Naive thymus-derived CD8-positive, alpha-beta T cell (primary cell): ENCODE measurements at regions of chr2 and their contacts with region 1.

Region 1: DNA sequence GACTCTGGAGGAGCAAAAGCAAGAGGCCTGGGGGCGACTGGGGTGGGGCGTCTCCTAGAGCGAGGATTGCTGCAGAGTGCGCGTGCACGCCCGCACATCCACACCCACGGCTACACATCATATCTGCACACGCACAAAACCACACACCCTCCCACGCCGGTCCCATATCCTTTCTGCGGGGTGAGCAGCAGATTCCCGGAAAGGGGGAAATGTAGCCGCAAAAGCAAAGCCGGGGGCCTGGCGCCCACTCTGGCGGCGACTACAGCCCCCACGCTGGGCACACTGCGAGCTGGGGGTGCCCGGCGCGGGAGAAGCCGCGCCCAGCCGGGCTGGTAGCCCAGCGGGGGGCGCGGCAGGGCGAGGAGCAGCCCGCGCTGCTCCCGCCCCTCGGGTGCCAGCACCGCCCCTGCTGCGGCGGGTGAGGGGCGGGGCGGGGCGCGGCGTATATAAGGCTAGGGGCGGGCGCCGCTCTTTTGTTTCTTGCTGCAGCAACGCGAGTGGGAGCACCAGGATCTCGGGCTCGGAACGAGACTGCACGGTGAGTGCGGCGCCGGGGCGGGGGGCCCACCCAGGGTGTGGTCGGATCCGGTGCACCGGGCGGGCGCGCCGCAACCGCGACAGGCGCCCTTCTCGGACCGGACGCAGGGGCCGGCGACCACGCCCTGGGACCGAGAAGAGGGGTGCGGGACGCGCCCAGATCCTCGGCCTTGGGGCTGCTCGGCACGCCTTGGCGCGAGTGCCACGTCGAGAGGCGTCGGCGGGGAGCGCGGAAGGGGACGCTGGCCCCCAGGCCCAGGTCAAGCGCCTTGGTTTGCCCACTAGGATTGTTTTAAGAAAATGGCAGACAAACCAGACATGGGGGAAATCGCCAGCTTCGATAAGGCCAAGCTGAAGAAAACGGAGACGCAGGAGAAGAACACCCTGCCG is at the start of gene TMSB10:
- DNase-seq: peak; percentile 83 to 95 (median 92)
- ATAC-seq: peak; percentile 70 to 71
- H3K4me3 Mint-ChIP-seq: peak within 1 kb of the TSS; percentile 92 to 98 (median 96)
- H3K27ac Mint-ChIP-seq: peak within 1 kb of the TSS; percentile 91 to 98 (median 96)
- H3K4me1 Mint-ChIP-seq: peaks cover 37 to 78% (median 71%) of the 10 kb centered on the region in 4 donors
- H3K27me3 Mint-ChIP-seq: no peaks in the 10 kb centered on the region
- polyA plus RNA-seq, gene TMSB10: 6,950 to 8,855 (median 7,882) TPM

Region 2: DNA sequence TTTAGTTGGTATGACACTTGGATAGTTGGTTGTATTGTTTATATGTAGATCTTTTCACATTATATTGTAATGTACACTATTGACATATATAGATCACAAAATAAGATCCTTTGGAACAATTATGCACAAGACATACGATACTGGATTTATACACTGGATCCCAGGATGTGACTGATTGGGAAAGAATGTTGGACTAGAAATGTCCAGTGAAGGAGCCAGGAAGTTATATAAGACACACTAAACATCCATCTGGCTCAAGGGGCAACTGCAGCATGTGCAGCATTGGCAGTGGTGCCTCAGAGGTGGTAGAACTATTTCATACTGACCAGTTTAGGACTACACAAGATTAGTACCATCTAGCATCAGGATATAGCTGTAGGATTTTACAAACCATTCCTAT is 129.4 kb before region 1 on chr2:
- POLR2A ChIA-PET with region 1: no interaction called
- DNase-seq: no peak
- ATAC-seq: no peak
- H3K4me3 Mint-ChIP-seq: no peak overlapping the region
- H3K27ac Mint-ChIP-seq: peak overlapping the region in 1 of 10 donors; percentile 28
- H3K4me1 Mint-ChIP-seq: peaks cover 15 to 35% (median 32%) of the 10 kb centered on the region in 4 donors
- H3K27me3 Mint-ChIP-seq: no peaks in the 10 kb centered on the region

Region 3: DNA sequence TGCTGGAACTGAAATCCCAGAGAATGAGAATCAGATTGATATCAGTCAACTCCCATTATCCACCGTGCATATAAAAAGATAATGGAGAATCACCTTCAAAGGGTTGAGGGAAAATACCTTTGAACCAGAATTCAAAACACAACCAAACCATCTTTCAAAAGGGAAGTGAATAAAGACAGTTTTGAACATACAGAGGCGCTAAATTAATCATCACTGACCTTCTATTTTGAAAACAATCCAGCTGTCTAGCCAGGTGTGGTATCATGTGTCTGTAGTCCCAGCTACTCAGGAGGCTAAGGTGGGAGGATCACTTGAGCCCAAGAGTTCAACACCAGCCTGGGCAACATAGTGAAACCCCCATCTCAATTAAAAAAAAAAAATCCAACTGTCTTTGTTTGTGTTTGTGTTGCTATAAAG is 88.2 kb before region 1 on chr2:
- POLR2A ChIA-PET with region 1: no interaction called
- DNase-seq: no peak
- ATAC-seq: peak in 1 of 2 donors; percentile 43
- H3K4me3 Mint-ChIP-seq: peak overlapping the region in 6 of 10 donors; percentile 0 to 46 (median 33)
- H3K27ac Mint-ChIP-seq: peak overlapping the region; percentile 35 to 87 (median 76)
- H3K4me1 Mint-ChIP-seq: peaks cover 34 to 84% (median 79%) of the 10 kb centered on the region in 4 donors
- H3K27me3 Mint-ChIP-seq: no peaks in the 10 kb centered on the region

Region 4: DNA sequence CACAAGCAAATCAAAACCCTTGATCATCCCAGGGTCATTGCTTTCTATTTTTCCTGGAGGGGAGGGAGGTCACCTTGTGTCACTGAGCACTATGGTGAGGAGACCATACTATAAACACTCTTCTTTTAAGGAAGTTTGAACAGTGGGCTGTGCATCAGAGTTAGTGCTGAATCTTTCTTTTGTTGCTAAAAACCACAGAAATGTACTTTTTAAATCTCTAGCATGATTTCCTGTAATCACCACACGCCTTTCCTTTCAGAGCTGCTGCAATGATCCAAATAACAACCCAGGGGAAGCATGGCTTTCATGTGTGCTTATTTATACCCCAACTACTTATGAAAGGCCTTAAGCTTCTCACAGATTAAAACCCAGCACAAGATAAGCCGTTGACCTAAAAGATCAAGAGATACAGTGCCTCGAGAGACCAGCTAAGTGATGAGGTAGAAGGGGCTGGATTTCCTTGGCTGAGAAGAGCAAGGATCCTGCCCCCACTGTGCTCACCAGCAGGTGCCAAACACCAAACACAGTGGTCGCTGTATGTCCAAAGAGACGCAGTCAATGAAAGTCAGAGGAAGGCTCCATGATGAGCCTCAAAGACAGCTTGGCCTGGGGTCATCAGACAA is 59.3 kb before region 1 on chr2:
- POLR2A ChIA-PET with region 1: interaction called, 65 read pairs
- DNase-seq: peak in 8 of 10 donors; percentile 55 to 88 (median 74)
- ATAC-seq: peak; percentile 74 to 76
- H3K4me3 Mint-ChIP-seq: peak overlapping the region; percentile 60 to 90 (median 82)
- H3K27ac Mint-ChIP-seq: peak overlapping the region; percentile 93 to 98 (median 97)
- H3K4me1 Mint-ChIP-seq: peaks cover 56 to 97% (median 95%) of the 10 kb centered on the region in 4 donors
- H3K27me3 Mint-ChIP-seq: no peaks in the 10 kb centered on the region

Region 5: GRCh38 chr2:84865181-84865783 is 40.2 kb before region 1 on chr2:
- POLR2A ChIA-PET with region 1: interaction called, 17 read pairs
- DNase-seq: peak in 3 of 10 donors; percentile 59 to 64 (median 61)
- ATAC-seq: peak; percentile 38 to 61
- H3K4me3 Mint-ChIP-seq: peak overlapping the region; percentile 37 to 90 (median 70)
- H3K27ac Mint-ChIP-seq: peak overlapping the region; percentile 93 to 99 (median 98)
- H3K4me1 Mint-ChIP-seq: peaks cover 43 to 91% (median 78%) of the 10 kb centered on the region in 4 donors
- H3K27me3 Mint-ChIP-seq: no peaks in the 10 kb centered on the region

Region 6: GRCh38 chr2:84881581-84882414 is 23.6 kb before region 1 on chr2:
- POLR2A ChIA-PET with region 1: interaction called, 289 read pairs
- DNase-seq: peak; percentile 67 to 92 (median 86)
- ATAC-seq: peak; percentile 62 to 68
- H3K4me3 Mint-ChIP-seq: peak overlapping the region; percentile 87 to 99 (median 94)
- H3K27ac Mint-ChIP-seq: peak overlapping the region; percentile 93 to 99 (median 98)
- H3K4me1 Mint-ChIP-seq: peaks cover 32 to 73% (median 57%) of the 10 kb centered on the region in 4 donors
- H3K27me3 Mint-ChIP-seq: peaks cover 0 to 2% (median 0%) of the 10 kb centered on the region in 5 donors

Region 7: DNA sequence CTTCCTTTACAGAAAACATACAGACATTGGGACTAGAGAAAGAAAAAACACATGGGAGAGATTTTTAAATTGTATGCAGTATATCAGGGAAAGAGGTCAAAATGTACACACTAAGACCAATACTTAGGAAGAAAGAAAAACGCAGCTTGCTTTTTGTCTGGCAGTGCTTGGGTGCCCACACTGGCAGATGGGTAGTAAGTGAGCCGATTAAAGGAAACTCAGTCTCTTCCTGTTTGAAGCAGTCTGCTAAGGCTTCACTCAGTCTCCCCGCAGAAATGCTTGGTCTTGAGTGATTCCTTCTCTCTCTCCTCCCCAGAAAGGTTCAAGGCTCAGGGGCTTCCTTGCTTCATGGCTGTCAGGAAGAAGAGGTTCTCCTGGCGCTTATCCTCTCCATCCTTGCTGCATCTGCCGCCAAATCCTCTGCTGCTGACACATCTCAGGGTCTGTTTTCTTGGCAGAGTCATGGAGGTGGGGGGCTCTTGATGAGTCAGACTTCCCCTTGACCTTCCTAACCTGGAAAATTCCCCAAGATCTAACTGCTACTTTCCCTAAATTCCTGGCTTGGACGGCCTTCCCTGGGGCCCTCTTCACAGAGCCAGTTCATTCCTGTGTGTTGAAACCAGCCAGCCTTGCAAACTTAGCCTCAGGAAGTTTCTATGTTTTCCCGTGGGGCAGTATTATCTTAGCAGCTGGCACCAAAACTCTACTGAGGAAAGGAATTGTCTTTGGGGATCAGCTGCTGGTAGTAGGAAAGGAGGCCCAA is 10.5 kb before region 1 on chr2:
- POLR2A ChIA-PET with region 1: interaction called, 249 read pairs
- DNase-seq: peak in 4 of 10 donors; percentile 26 to 54 (median 50)
- ATAC-seq: peak; percentile 74 to 80
- H3K4me3 Mint-ChIP-seq: peak overlapping the region; percentile 58 to 86 (median 70)
- H3K27ac Mint-ChIP-seq: peak overlapping the region; percentile 56 to 98 (median 96)
- H3K4me1 Mint-ChIP-seq: peaks cover 29 to 72% (median 62%) of the 10 kb centered on the region in 4 donors
- H3K27me3 Mint-ChIP-seq: no peaks in the 10 kb centered on the region

Region 8: GRCh38 chr2:85327822-85328617 is 422.6 kb after region 1 on chr2 and contains the start of gene TGOLN2:
- POLR2A ChIA-PET with region 1: interaction called, 11 read pairs
- DNase-seq: peak; percentile 89 to 96 (median 94)
- ATAC-seq: peak; percentile 83 to 87
- H3K4me3 Mint-ChIP-seq: peak within 1 kb of the TSS; percentile 96 to 100 (median 99)
- H3K27ac Mint-ChIP-seq: peak within 1 kb of the TSS; percentile 97 to 100 (median 100)
- H3K4me1 Mint-ChIP-seq: peaks cover 27 to 53% (median 42%) of the 10 kb centered on the region in 4 donors
- H3K27me3 Mint-ChIP-seq: no peaks in the 10 kb centered on the region
- polyA plus RNA-seq, gene TGOLN2: 55.6 to 80.0 (median 65.1) TPM